ENCODE measurements at regions of chrX and their contacts with region 1.

Region 1: GRCh38 chrX:69222103-69223090 is 57.1 kb upstream of the PJA1 start:
- DNase-seq: peak; percentile 79
- ATAC-seq: peak; percentile 90

Region 2: DNA sequence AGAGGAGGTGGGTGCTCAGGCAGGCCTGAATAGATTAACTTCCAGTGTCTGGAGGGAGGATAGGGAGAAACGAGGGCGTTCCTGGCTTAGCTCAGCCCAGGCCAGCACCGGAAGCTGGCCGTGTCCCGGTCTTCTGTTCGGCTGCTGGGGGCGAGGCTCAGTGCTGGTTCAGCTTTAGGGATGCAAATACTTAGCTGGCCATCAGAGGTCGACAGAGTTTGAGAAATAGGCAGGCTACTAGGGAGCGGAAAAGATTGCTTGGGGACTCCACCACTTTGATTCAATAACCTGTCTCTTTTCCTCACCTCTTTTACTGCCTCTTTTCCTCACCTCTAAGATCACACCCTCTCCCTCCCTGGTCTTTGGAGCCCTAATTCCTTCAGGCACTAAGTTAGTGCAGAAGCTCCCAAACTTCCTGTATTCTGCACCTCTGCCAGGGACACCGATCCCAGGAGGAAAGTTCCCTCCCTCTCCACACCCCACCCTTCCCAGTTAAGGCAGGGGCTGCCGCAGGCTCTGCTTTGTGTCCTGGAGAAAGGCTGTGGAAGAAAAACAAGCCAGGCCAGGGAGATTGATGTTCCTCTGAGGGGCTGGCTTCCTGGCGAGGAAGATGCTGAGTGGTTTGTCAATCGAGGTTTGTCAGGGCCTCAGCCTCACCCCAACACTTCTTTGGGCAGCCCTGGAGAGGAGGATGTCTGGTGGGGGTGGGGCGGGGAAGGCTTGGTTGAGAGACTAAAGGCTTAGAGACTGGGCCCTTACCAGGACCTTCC is 399.6 kb before region 1 on chrX:
- intact Hi-C with region 1: loop called (anchors 2 kb)
- DNase-seq: peak; percentile 69
- ATAC-seq: peak; percentile 94

Region 3: DNA sequence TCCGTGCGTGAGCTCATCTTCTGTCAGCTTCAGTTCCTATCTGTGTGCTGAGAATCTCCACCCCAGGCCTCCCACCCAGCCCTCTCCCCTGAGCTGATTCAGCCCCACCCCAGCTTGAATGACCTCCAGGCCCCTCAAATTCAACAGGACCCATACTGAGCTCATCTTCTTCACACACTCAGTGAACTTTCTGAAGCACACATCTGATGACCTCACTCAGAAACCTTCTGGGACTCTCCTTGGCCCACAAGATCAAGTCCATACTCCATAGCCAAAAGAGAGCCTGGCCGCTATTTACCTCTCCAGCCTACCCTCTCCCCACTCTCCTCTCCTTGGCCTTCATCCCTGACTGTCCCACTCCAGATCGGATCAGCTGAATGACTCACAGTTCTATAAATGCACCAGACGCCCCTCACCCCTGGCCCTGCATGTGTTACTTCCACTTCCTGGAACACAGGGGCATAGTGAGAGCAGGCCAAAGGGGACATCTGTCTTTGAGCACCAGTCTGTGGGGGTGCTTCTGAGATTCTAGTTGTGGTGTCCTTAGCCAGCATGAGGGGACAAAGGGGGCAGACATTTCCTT is 119.7 kb before region 1 on chrX:
- intact Hi-C with region 1: no loop called
- DNase-seq: no peak
- ATAC-seq: no peak